Activated CD4-positive, alpha-beta T cell treated with anti-CD3 and anti-CD28 coated beads for 36 hours (primary cell): ENCODE measurements at regions of chr21 and their contacts with region 1.

Region 1: DNA sequence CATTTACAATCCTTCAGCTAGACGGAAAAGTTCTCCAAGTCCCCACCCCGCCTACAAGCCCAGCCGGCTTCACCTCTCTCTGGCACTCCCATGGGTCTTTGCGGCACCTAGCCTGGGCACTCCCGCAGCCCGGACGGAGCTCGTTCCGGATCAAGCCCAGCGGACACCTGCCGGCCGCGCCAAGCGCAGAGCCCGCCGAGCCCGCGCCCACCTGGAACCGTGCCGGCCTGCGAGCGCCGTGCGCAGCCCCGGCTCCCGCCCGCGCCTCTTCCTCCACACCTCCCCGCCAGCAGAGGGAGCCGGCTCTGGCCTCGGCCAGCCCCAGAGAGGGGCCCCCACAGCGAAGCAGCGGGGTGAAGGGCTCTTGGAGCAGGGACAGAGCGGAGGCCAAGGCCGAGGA is 50.0 kb upstream of the KRTAP19-8 start:
- DNase-seq: peak; percentile 14
- ATAC-seq: no peak
- H3K4me3 Mint-ChIP-seq: no peak overlapping the region
- H3K27ac Mint-ChIP-seq: no peak overlapping the region
- H3K4me1 Mint-ChIP-seq: peaks cover 11% of the 10 kb centered on the region
- H3K27me3 Mint-ChIP-seq: peaks cover 9% of the 10 kb centered on the region

Region 2: DNA sequence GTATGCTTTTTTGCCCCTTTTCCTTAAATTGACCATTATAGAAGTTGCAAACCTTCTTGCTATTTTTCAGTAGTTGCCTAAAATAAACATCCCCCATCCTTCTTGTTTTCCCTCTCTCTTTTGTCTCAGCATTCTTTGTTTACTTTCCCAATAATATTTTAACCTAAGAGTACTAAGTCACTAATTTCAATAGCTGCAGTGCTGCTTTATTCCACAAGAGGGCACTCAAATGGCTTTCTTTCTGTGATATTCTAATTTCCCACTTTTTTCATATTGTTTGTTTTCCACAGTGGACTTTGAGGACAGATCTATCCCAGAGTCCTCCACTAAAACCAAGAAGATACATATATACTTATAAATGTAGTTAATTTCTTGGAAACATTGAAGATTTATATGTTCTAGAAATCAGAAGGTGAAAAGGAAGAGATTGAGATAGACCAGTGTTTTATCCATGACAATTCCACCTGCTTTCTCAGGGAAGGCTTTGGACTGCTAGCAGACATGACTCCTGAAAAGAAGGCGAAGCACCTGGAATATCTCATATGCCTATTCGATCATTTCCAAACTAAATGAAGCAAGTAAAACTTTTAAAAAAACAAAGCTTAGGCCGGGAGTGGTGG is 1043.8 kb before region 1 on chr21:
- CTCF ChIA-PET with region 1: interaction called, 4 read pairs
- POLR2A ChIA-PET with region 1: no interaction called
- intact Hi-C with region 1: loop called (anchors 2 to 5 kb)
- DNase-seq: peak; percentile 7
- ATAC-seq: no peak
- H3K4me3 Mint-ChIP-seq: no peak overlapping the region
- H3K27ac Mint-ChIP-seq: no peak overlapping the region
- H3K4me1 Mint-ChIP-seq: no peaks in the 10 kb centered on the region
- H3K27me3 Mint-ChIP-seq: peaks cover 5% of the 10 kb centered on the region

Region 3: DNA sequence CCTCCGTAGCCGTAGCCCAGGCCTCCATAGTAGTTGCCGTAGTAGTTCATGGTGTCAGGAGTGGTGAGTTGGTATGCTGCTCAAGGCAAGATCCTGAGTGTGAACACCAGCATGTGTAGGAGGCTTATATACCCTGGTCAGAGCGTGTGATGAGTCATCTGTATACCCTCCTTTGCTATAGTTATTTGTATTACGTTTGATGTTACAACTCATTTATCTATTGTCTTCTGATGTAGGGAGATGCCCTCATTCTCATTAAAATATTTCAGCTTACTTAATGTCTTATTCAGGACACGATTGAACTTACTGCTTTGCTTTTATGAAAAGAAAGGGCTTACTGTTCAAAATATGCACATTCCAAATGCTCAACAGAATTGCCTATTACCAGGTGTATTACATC is 586.3 kb before region 1 on chr21 and contains the start of gene KRTAP19-5:
- CTCF ChIA-PET with region 1: no interaction called
- POLR2A ChIA-PET with region 1: no interaction called
- intact Hi-C with region 1: loop called (anchors 1 to 2 kb)
- DNase-seq: no peak
- ATAC-seq: no peak
- H3K4me3 Mint-ChIP-seq: no peak within 1 kb of the TSS
- H3K27ac Mint-ChIP-seq: no peak within 1 kb of the TSS
- H3K4me1 Mint-ChIP-seq: no peaks in the 10 kb centered on the region
- H3K27me3 Mint-ChIP-seq: no peaks in the 10 kb centered on the region
- total RNA-seq, gene KRTAP19-5: not detected

Region 4: DNA sequence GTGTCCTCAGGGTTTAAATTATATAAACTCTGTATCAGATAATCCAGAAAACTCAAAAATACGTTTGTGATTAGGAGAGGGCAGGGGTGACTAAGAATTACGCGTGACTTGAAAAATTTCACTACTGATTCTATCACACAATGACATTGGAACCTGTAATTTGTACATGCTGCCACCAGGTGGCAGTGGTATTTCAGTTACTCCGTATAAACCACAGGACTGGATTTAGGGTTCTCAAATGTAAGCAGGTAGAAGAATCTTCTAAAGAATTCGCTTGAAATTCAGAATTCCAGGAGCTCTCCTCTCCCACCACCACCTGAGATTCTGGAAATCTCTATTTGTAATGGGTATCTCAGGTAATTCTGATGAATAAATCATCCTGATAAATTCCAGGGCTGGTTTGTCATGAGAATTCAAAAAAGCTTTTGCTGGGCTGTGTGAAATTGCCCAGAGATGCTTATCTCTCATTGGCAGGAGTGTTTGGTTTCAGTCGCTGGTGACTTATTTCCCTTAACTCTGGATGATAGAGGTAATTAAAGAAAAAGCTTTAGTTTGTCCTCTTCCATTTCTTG is 257.0 kb before region 1 on chr21:
- CTCF ChIA-PET with region 1: interaction called, 6 read pairs
- POLR2A ChIA-PET with region 1: no interaction called
- intact Hi-C with region 1: loop called (anchors 1 kb)
- DNase-seq: peak; percentile 67
- ATAC-seq: no peak
- H3K4me3 Mint-ChIP-seq: no peak overlapping the region
- H3K27ac Mint-ChIP-seq: no peak overlapping the region
- H3K4me1 Mint-ChIP-seq: no peaks in the 10 kb centered on the region
- H3K27me3 Mint-ChIP-seq: peaks cover 7% of the 10 kb centered on the region

Region 5: GRCh38 chr21:30942192-30942591 is 146.1 kb before region 1 on chr21:
- CTCF ChIA-PET with region 1: no interaction called
- POLR2A ChIA-PET with region 1: no interaction called
- intact Hi-C with region 1: loop called in 1 of 2 experiments (anchors 10 kb)
- DNase-seq: no peak
- ATAC-seq: no peak
- H3K4me3 Mint-ChIP-seq: no peak overlapping the region
- H3K27ac Mint-ChIP-seq: no peak overlapping the region
- H3K4me1 Mint-ChIP-seq: no peaks in the 10 kb centered on the region
- H3K27me3 Mint-ChIP-seq: peaks cover 2% of the 10 kb centered on the region

Region 6: DNA sequence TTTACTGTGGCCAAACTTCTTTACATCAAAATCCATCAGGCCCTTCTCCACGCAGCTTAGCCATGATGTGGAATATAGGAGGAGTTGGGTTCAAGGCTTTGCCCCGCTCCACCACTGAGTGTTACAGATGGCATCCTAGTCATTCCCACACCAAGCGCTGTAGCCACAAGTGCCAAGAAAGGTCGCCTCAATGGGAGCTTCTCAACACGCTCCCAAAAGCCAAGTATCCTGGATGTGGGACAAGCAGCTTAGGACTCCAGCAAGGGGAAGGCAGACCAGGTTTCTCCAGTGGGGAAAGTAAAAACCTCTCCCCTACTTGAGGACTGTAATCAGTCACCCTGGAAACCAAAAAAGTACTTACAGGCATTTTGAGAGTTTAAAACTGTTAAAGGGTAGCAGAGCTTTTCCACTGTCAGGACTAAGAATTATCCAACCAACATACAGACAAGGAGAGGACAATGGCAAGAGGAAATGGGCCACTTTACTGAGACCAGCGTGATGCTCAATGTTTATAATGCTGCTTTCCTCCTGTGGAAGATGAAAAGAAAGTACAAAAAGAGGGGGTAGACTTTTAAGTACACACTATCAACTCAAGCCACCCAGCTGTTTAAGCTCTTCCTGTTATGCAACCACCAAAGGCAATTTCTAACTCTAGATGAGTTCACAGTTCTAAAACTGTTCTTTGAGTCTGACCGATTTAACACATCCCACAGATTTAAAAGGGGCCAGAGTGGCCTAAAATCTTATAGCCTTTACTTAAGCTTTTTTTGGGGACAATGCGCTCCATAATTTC is 70.7 kb after region 1 on chr21:
- CTCF ChIA-PET with region 1: no interaction called
- POLR2A ChIA-PET with region 1: no interaction called
- intact Hi-C with region 1: no loop called
- DNase-seq: no peak
- ATAC-seq: peak; percentile 65
- H3K4me3 Mint-ChIP-seq: peak overlapping the region; percentile 6
- H3K27ac Mint-ChIP-seq: peak overlapping the region; percentile 70
- H3K4me1 Mint-ChIP-seq: peaks cover 82% of the 10 kb centered on the region
- H3K27me3 Mint-ChIP-seq: no peaks in the 10 kb centered on the region

Region 7: GRCh38 chr21:31248601-31249000 is 160.3 kb after region 1 on chr21:
- CTCF ChIA-PET with region 1: no interaction called
- POLR2A ChIA-PET with region 1: no interaction called
- intact Hi-C with region 1: no loop called
- DNase-seq: no peak
- ATAC-seq: no peak
- H3K4me3 Mint-ChIP-seq: no peak overlapping the region
- H3K27ac Mint-ChIP-seq: no peak overlapping the region
- H3K4me1 Mint-ChIP-seq: no peaks in the 10 kb centered on the region
- H3K27me3 Mint-ChIP-seq: no peaks in the 10 kb centered on the region